Activated T-helper 1 cell treated with anti-CD3 and anti-CD28 coated beads, Interleukin-12 subunit alpha, Interleukin-12 subunit beta, Interleukin-2, Interleukin-4 antibody, amounts not matched to agents 30 ng/mL and 10 ng/mL and 1 ng/mL, durations not matched to agents 14 hours and 24 hours and 36 hours (primary cell): ENCODE measurements at regions of chr5 and their contacts with region 1.

Region 1: DNA sequence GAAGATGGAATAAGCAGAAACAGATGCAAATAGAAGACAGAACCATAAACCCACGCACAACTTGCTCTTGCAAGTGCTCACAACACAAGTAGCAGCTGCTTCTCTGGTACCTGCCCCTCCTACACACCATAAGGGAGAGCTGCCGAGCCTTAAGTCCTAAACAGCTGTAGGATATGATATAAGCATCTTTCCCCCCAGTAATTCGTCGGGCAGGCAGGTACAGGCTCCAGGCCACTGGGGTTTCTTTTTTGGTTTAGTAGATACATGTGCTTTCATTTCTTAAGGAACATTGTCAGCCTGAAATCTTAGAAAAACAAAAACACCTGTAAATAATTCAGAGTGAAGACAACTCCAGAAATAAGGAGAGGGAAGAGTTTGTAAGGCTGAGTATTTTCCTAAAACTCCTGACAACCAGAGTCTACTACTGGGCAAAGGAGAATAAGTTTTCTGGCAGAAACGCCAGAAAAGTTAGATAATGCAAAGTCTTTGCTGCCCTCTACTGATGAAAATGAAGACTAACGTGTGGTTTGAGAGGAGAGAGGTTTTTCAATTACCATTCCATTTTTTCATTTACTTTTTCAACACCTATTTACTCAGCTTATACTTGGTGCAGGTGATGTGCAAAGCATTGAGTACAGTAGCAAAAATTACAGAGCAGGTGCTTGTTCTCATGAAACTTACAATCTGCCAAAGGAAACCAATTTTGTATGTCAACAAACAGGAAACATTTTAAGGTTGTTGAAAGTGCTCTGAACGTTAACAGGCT is 20.1 kb upstream of the TCERG1 start:
- DNase-seq: no peak
- H3K4me3 Mint-ChIP-seq: no peak overlapping the region
- H3K27ac Mint-ChIP-seq: no peak overlapping the region
- H3K4me1 Mint-ChIP-seq: peaks cover 8% of the 10 kb centered on the region
- H3K27me3 Mint-ChIP-seq: peaks cover 11% of the 10 kb centered on the region

Region 2: DNA sequence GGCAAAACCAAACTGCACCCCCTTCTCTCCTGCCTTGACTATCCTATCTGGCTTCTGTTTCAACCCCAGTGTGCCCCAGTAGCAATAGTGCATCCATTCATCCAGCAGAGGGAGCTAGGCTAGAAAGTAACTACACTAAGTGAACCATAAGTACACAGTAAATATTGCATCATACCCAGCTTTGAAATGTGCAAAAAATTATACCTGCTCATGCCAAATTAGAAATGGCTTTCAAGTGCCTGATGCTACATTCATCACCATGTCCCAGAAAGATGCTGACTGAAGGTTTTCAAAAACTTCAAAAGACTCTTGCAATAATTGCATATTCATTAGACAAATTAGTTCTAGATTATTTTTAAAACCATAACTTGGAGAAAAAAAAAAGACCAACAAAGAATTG is 745.4 kb before region 1 on chr5:
- intact Hi-C with region 1: loop called (anchors 1 kb)
- DNase-seq: peak; percentile 2
- H3K4me3 Mint-ChIP-seq: no peak overlapping the region
- H3K27ac Mint-ChIP-seq: no peak overlapping the region
- H3K4me1 Mint-ChIP-seq: no peaks in the 10 kb centered on the region
- H3K27me3 Mint-ChIP-seq: peaks cover 2% of the 10 kb centered on the region

Region 3: GRCh38 chr5:145697251-145697990 is 729.6 kb before region 1 on chr5:
- intact Hi-C with region 1: loop called (anchors 1 kb)
- DNase-seq: no peak
- H3K4me3 Mint-ChIP-seq: no peak overlapping the region
- H3K27ac Mint-ChIP-seq: no peak overlapping the region
- H3K4me1 Mint-ChIP-seq: no peaks in the 10 kb centered on the region
- H3K27me3 Mint-ChIP-seq: no peaks in the 10 kb centered on the region

Region 4: GRCh38 chr5:145834917-145835847 is 591.9 kb before region 1 on chr5 and contains the start of gene PRELID2:
- intact Hi-C with region 1: loop called (anchors 10 kb)
- DNase-seq: peak; percentile 46
- H3K4me3 Mint-ChIP-seq: peak within 1 kb of the TSS; percentile 70
- H3K27ac Mint-ChIP-seq: peak within 1 kb of the TSS; percentile 7
- H3K4me1 Mint-ChIP-seq: peaks cover 5% of the 10 kb centered on the region
- H3K27me3 Mint-ChIP-seq: peaks cover 18% of the 10 kb centered on the region
- total RNA-seq, gene PRELID2: 1.5 and 2.1 TPM in 2 replicates

Region 5: GRCh38 chr5:146291421-146292074 is 135.5 kb before region 1 on chr5:
- intact Hi-C with region 1: loop called (anchors 1 kb)
- DNase-seq: no peak
- H3K4me3 Mint-ChIP-seq: no peak overlapping the region
- H3K27ac Mint-ChIP-seq: no peak overlapping the region
- H3K4me1 Mint-ChIP-seq: no peaks in the 10 kb centered on the region
- H3K27me3 Mint-ChIP-seq: no peaks in the 10 kb centered on the region